ENCODE measurements at regions of chr9 and their contacts with region 1.

Region 1: GRCh38 chr9:111975709-111976108 is 79.1 kb downstream of the UGCG start:
- DNase-seq: peak; percentile 39
- ATAC-seq: peak; percentile 79
- H3K4me3 ChIP-seq: no peak overlapping the region
- H3K27ac ChIP-seq: no peak overlapping the region
- H3K4me1 ChIP-seq: peaks cover 12% of the 10 kb centered on the region
- H3K27me3 ChIP-seq: no peaks in the 10 kb centered on the region
- CTCF ChIP-seq: peak; percentile 4 to 51 (median 14); a peak in 2 of 6 replicates
- EP300 ChIP-seq: no peak
- POLR2A ChIP-seq: no peak
- RAD21 ChIP-seq: peak; percentile 57

Region 2: DNA sequence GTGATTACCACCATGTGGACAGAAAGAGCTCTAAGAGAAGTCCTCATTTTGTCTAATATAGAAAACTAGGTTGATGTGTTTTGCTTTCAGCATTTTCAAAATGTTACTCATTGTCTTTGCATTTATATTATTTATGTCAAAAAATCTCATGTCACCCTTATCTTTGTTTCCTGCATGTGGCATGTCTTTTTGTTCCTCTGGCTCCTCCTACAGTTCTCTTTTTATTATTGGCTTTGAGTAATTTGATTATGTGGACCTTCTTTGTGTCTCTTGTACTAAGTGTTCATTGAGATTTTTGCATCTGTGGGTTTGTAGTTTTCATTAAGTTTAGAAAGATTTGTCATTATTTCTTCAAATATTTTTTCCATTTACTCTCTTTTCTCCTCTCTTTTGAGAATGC is 255.5 kb before region 1 on chr9:
- CTCF ChIA-PET with region 1: no interaction called
- POLR2A ChIA-PET with region 1: no interaction called
- RAD21 ChIA-PET with region 1: no interaction called
- SMC1A ChIA-PET with region 1: no interaction called
- in situ Hi-C with region 1: no loop called
- intact Hi-C with region 1: no loop called
- DNase-seq: no peak
- ATAC-seq: no peak
- H3K4me3 ChIP-seq: no peak overlapping the region
- H3K27ac ChIP-seq: no peak overlapping the region
- H3K4me1 ChIP-seq: no peaks in the 10 kb centered on the region
- H3K27me3 ChIP-seq: no peaks in the 10 kb centered on the region
- CTCF ChIP-seq: peak in 1 of 3 experiments; percentile 19; a peak in 1 of 6 replicates
- EP300 ChIP-seq: no peak
- POLR2A ChIP-seq: no peak
- RAD21 ChIP-seq: no peak; the same call in 1 of the 2 replicates

Region 3: DNA sequence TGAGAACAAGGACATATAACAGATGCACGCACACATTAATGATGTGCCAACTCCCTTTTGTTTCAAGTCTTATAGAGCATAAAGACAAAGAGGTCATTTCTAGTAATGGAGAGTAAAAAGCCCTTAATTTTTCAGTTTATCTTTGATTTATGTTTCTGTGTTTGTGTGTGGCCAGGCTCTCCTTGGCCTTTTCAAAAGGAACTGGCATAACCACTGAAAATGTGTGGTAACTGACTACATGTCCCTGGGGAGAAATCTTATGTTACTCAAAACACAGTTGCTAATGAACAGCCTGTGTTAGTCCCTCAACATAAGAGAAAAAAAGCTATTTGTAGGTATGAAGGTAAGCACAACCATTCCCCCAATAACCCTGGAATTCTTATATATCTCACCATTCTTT is 133.4 kb before region 1 on chr9:
- CTCF ChIA-PET with region 1: no interaction called
- POLR2A ChIA-PET with region 1: no interaction called
- RAD21 ChIA-PET with region 1: no interaction called
- SMC1A ChIA-PET with region 1: no interaction called
- in situ Hi-C with region 1: no loop called
- intact Hi-C with region 1: no loop called
- DNase-seq: no peak
- ATAC-seq: peak; percentile 78
- H3K4me3 ChIP-seq: no peak overlapping the region
- H3K27ac ChIP-seq: no peak overlapping the region
- H3K4me1 ChIP-seq: 0 out of 2 replicates have a peak, but pooled peaks cover 4% of the 10 kb centered on the region
- H3K27me3 ChIP-seq: no peaks in the 10 kb centered on the region; a peak in 1 of 4 replicates
- CTCF ChIP-seq: no peak
- EP300 ChIP-seq: no peak
- POLR2A ChIP-seq: no peak
- RAD21 ChIP-seq: no peak

Region 4: DNA sequence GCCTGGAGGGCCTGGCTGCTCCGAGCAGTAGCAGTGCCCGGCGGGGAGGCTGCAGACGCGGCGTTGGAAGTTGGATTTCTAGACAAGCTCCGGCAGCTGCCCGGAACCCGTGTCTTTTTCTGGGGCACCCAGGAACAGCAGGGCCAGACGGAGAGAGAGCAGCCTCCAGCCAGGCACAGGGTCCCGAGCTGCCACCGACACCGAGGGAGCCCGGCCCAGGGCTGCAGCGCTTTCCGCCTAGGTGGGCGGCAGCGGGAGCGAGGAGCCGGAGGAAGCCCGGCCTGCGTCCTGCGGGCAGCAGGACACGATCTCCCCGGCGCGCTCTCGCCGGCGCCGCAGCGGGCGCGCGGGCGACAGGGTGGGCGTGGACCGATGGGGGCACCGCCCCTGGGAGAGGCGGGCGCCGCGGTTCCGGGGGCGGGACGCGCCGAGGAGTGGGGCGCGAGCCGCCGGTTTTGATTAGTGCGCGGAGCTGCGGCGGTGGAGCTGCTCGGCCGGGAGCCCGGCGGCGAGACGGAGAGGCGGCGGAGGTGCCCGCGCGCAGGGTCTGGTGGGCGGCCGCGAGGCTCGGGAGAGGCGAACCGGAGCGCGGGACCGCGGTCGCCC is 79.3 kb before region 1 on chr9 and contains the start of gene UGCG:
- CTCF ChIA-PET with region 1: interaction called, 7 read pairs
- POLR2A ChIA-PET with region 1: interaction called, 7 read pairs
- RAD21 ChIA-PET with region 1: interaction called, 10 read pairs
- SMC1A ChIA-PET with region 1: interaction called, 6 read pairs
- in situ Hi-C with region 1: no loop called
- intact Hi-C with region 1: no loop called
- DNase-seq: no peak
- ATAC-seq: peak; percentile 79
- H3K4me3 ChIP-seq: peak within 1 kb of the TSS; percentile 80
- H3K27ac ChIP-seq: peak within 1 kb of the TSS; percentile 93
- H3K4me1 ChIP-seq: no peaks in the 10 kb centered on the region; the same call in 1 of the 2 replicates
- H3K27me3 ChIP-seq: no peaks in the 10 kb centered on the region
- CTCF ChIP-seq: no peak
- EP300 ChIP-seq: 0 out of 4 replicates have a peak, but pooled peaks of 1 of the 2 experiments have one; percentile 14
- POLR2A ChIP-seq: peak; percentile 93
- RAD21 ChIP-seq: 0 out of 2 replicates have a peak, but pooled peaks have one; percentile 2
- polyA plus RNA-seq, gene UGCG: 48.0 to 62.1 TPM

Region 5: DNA sequence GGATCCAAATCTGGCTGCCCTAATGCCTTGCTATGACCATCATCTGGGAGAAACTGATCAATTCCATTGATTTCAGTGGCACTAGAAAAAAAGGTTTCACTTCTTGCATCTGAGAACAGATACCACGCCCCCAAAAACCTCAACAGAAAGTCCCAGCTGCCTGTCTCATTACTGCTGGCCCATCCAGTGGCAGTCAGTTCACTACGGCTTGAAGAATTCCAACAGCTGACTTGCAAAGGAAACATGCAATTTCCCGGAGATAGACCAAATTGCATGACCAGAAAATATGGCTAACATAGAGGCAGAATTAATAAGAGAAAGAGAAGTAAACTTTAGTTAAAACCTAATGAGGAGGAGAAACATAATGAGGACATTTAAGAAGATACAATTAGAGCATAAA is 30.5 kb before region 1 on chr9:
- CTCF ChIA-PET with region 1: interaction called, 3 read pairs
- POLR2A ChIA-PET with region 1: interaction called, 3 read pairs
- RAD21 ChIA-PET with region 1: interaction called, 3 read pairs
- SMC1A ChIA-PET with region 1: interaction called, 15 read pairs
- in situ Hi-C with region 1: no loop called
- intact Hi-C with region 1: no loop called
- DNase-seq: peak; percentile 65
- ATAC-seq: peak; percentile 87
- H3K4me3 ChIP-seq: no peak overlapping the region
- H3K27ac ChIP-seq: peak overlapping the region; percentile 47
- H3K4me1 ChIP-seq: peaks cover 34% of the 10 kb centered on the region
- H3K27me3 ChIP-seq: no peaks in the 10 kb centered on the region
- CTCF ChIP-seq: no peak
- EP300 ChIP-seq: peak; percentile 60 to 75; a peak in 2 of 4 replicates
- POLR2A ChIP-seq: no peak
- RAD21 ChIP-seq: no peak

Measured in GM12878 (cell line).